HepG2 (cell line): ENCODE measurements at regions of chr19 and their contacts with region 1.

Region 1: GRCh38 chr19:2315818-2316353 is 7.9 kb upstream of the LINGO3 start:
- DNase-seq: peak; percentile 55
- ATAC-seq: peak; percentile 92
- H3K4me3 ChIP-seq: peak overlapping the region in 2 of 3 experiments; percentile 4 to 61; a peak in 4 of 6 replicates
- H3K27ac ChIP-seq: no peak overlapping the region
- H3K4me1 ChIP-seq: peaks cover 30% of the 10 kb centered on the region
- H3K27me3 ChIP-seq: peaks cover 5 to 7% of the 10 kb centered on the region in 2 experiments; a peak in 4 of 5 replicates
- CTCF ChIP-seq: peak; percentile 98
- EP300 ChIP-seq: no peak
- POLR2A ChIP-seq: no peak
- RAD21 ChIP-seq: peak; percentile 96

Region 2: GRCh38 chr19:2151339-2152229 is 164.3 kb before region 1 on chr19 and contains the start of gene AP3D1:
- CTCF ChIA-PET with region 1: interaction called, 8 read pairs
- POLR2A ChIA-PET with region 1: interaction called, 3 read pairs
- in situ Hi-C with region 1: loop called (anchors 10 kb)
- intact Hi-C with region 1: no loop called
- DNase-seq: peak; percentile 98
- ATAC-seq: peak; percentile 86
- H3K4me3 ChIP-seq: peak within 1 kb of the TSS; percentile 85 to 100 (median 97)
- H3K27ac ChIP-seq: peak within 1 kb of the TSS; percentile 76
- H3K4me1 ChIP-seq: peaks cover 60% of the 10 kb centered on the region
- H3K27me3 ChIP-seq: no peaks in the 10 kb centered on the region; a peak in 1 of 5 replicates
- CTCF ChIP-seq: peak; percentile 12; the same call in 1 of the 2 replicates
- EP300 ChIP-seq: no peak; a peak in 1 of 4 replicates
- POLR2A ChIP-seq: peak; percentile 25 to 52; a peak in 1 of 4 replicates
- RAD21 ChIP-seq: no peak; the same call in none of the 2 replicates
- total RNA-seq, gene AP3D1: 73.5 and 82.6 TPM in 2 replicates

Region 3: GRCh38 chr19:2221918-2222317 is 94.0 kb before region 1 on chr19:
- CTCF ChIA-PET with region 1: no interaction called
- POLR2A ChIA-PET with region 1: no interaction called
- in situ Hi-C with region 1: no loop called
- intact Hi-C with region 1: no loop called
- DNase-seq: no peak
- ATAC-seq: peak; percentile 10; the same call in 1 of the 3 replicates
- H3K4me3 ChIP-seq: no peak overlapping the region
- H3K27ac ChIP-seq: no peak overlapping the region
- H3K4me1 ChIP-seq: no peaks in the 10 kb centered on the region
- H3K27me3 ChIP-seq: no peaks in the 10 kb centered on the region
- CTCF ChIP-seq: peak; percentile 52
- EP300 ChIP-seq: no peak
- POLR2A ChIP-seq: no peak
- RAD21 ChIP-seq: no peak

Region 4: DNA sequence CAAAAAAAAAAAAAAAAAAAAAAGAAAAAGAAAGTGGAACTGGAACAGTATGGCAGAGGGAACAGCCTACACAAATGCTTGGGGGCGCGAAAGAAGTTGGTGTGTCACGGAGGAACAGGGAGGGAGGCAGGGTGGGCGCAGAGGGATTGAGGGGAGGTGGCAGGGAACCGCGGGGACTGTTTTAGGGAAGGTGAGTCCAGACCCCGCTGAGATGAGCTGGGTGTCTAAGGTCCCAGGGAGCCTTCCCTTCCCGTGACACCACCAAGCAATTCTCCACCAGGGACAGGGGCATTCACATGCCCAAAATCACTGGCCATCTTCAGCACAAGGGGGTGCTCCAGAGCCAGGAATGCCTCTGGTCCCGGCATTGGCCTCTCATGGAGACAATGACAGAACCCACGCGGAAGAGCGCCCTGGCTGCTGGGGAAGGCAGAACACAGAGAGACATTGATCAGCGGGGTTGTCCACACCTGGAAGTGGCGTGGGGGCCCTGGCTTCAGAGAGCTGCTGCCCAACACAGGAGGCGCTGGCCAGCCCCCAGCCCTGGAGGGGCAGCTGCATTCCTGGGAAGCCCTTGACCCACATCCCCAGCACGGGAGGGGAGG is 40.9 kb before region 1 on chr19:
- CTCF ChIA-PET with region 1: interaction called, 16 read pairs
- POLR2A ChIA-PET with region 1: no interaction called
- in situ Hi-C with region 1: loop called (anchors 5 kb)
- intact Hi-C with region 1: loop called (anchors 1 kb)
- DNase-seq: peak; percentile 73
- ATAC-seq: peak; percentile 37
- H3K4me3 ChIP-seq: no peak overlapping the region
- H3K27ac ChIP-seq: no peak overlapping the region
- H3K4me1 ChIP-seq: peaks cover 40% of the 10 kb centered on the region
- H3K27me3 ChIP-seq: no peaks in the 10 kb centered on the region
- CTCF ChIP-seq: peak; percentile 92
- EP300 ChIP-seq: no peak
- POLR2A ChIP-seq: no peak; a peak in 2 of 4 replicates
- RAD21 ChIP-seq: peak; percentile 77

Region 5: GRCh38 chr19:2610637-2611482 is 295.0 kb after region 1 on chr19:
- CTCF ChIA-PET with region 1: no interaction called
- POLR2A ChIA-PET with region 1: no interaction called
- in situ Hi-C with region 1: no loop called
- intact Hi-C with region 1: loop called (anchors 10 kb)
- DNase-seq: peak; percentile 70
- ATAC-seq: peak; percentile 92
- H3K4me3 ChIP-seq: peak overlapping the region; percentile 44 to 77 (median 62); a peak in 4 of 6 replicates
- H3K27ac ChIP-seq: no peak overlapping the region
- H3K4me1 ChIP-seq: peaks cover 16% of the 10 kb centered on the region; the same call in 1 of the 2 replicates
- H3K27me3 ChIP-seq: no peaks in the 10 kb centered on the region; a peak in 1 of 5 replicates
- CTCF ChIP-seq: peak; percentile 99
- EP300 ChIP-seq: no peak
- POLR2A ChIP-seq: no peak
- RAD21 ChIP-seq: peak; percentile 99